GM12878 (cell line): ENCODE measurements at regions of chr17 and their contacts with region 1.

Region 1: DNA sequence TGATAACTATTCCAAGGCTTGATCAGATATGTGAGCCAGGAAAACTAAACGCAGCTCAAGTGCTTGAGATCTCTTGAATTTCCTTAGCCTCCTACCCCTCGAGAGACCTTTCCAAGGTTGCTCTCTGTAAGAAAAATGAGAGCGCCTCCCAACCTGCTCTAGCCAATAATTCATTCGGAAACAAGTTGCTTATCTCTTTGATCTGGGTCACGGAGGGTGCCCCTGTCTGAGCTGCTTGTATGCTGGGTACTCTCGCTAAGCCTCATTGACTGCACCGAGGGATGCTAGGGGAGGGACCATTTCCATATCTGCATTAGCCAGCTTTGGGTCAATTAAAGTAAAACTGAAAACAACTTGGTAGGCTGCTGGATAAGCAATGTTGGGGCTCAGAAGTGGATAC is 70.1 kb upstream of the SHISA6 start:
- DNase-seq: no peak
- ATAC-seq: no peak
- H3K4me3 ChIP-seq: no peak overlapping the region
- H3K27ac ChIP-seq: no peak overlapping the region
- H3K4me1 ChIP-seq: no peaks in the 10 kb centered on the region
- H3K27me3 ChIP-seq: no peaks in the 10 kb centered on the region
- CTCF ChIP-seq: no peak
- EP300 ChIP-seq: no peak
- POLR2A ChIP-seq: no peak
- RAD21 ChIP-seq: no peak

Region 2: DNA sequence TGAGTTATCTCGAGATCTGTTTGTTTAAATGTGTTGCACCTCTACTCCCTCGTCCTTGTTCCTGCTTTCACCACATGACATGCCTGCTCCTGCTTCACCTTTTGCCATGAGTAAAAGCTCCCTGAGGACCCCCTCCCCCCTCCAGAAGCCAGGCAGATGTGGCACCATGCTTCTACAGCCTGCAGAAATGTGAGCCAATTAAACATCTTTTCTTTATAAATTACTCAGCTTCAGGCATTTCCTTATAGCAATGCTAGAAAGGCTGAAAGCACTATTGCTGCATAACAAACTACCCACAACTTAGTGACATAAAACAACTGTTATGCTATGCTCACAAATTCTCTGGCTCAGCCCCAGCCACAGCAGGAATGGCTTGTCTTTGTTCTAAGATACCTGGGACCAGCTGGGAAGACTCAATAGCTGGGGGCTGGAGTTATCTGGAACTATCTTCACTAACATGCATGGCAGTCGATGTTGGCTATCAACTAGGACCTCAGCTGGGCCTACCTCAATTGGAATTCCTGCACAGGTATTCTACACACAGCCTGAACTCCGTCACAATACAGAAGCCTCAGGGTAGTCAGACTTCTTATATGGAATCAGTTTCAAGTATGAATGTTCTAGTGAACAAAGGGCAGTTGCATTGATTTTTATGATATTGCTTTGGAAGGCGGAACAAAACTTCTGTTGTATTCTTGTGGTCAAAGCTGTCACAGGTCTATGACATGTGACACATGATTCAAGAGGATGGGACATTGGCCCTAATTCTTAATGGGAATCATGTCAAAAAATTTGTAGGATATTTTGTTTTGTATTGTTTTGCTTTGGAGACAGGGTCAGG is 147.0 kb before region 1 on chr17:
- CTCF ChIA-PET with region 1: no interaction called
- POLR2A ChIA-PET with region 1: no interaction called
- RAD21 ChIA-PET with region 1: no interaction called
- SMC1A ChIA-PET with region 1: no interaction called
- in situ Hi-C with region 1: loop called (anchors 25 kb)
- intact Hi-C with region 1: no loop called
- DNase-seq: no peak
- ATAC-seq: no peak
- H3K4me3 ChIP-seq: no peak overlapping the region
- H3K27ac ChIP-seq: no peak overlapping the region
- H3K4me1 ChIP-seq: no peaks in the 10 kb centered on the region
- H3K27me3 ChIP-seq: no peaks in the 10 kb centered on the region
- CTCF ChIP-seq: no peak
- EP300 ChIP-seq: no peak
- POLR2A ChIP-seq: no peak
- RAD21 ChIP-seq: no peak

Region 3: GRCh38 chr17:11221721-11222120 is 50.8 kb after region 1 on chr17:
- CTCF ChIA-PET with region 1: no interaction called
- POLR2A ChIA-PET with region 1: no interaction called
- RAD21 ChIA-PET with region 1: no interaction called
- SMC1A ChIA-PET with region 1: no interaction called
- in situ Hi-C with region 1: loop called (anchors 5 kb)
- intact Hi-C with region 1: no loop called
- DNase-seq: no peak
- ATAC-seq: no peak
- H3K4me3 ChIP-seq: no peak overlapping the region
- H3K27ac ChIP-seq: no peak overlapping the region
- H3K4me1 ChIP-seq: no peaks in the 10 kb centered on the region
- H3K27me3 ChIP-seq: no peaks in the 10 kb centered on the region
- CTCF ChIP-seq: no peak
- EP300 ChIP-seq: no peak
- POLR2A ChIP-seq: no peak
- RAD21 ChIP-seq: no peak